Breast epithelium (tissue), 4 donors: ENCODE measurements at regions of chr6 and their contacts with region 1.

Region 1: GRCh38 chr6:41411961-41412360 is 76.6 kb downstream of the NCR2 start:
- DNase-seq: no peak
- H3K4me3 ChIP-seq: no peak overlapping the region
- H3K27ac ChIP-seq: no peak overlapping the region
- H3K4me1 ChIP-seq: no peaks in the 10 kb centered on the region
- H3K27me3 ChIP-seq: peaks cover 0 to 15% of the 10 kb centered on the region in 2 donors
- CTCF ChIP-seq: no peak
- POLR2A ChIP-seq: no peak

Region 2: DNA sequence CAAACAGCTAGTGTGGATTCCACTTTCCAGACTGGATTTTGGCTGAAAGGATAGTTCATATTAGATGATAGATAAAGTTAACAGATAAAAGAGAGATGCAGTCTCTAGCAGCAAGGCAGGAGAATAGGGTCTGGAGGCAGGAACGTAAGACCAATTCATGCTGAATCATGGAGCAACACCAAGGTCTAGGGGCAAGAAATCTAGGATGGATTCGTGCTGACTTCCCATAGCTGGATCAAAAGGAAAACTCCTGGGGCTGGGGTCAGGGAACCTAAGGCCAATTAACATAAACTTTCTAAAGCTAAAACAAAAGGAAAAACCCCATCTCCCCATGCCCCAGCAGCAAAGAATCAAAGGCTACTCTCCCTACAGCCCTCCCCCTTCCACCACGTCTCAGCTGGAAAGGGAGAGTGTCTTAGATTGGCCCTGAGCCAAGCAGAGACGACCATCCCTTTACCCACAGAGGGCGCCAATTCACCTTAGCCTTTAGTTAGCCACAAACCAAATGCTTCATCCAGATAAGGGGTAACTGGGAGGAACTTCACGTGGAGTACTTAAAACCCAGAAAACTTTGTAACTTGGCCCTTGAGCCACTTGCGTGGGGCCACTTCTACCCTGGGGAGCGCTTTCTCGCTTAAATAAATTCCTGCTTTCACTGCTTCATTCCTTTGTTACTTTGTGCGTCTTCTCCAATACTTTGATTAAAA is 133.1 kb before region 1 on chr6:
- intact Hi-C with region 1: no loop called
- DNase-seq: no peak
- H3K4me3 ChIP-seq: no peak overlapping the region
- H3K27ac ChIP-seq: no peak overlapping the region
- H3K4me1 ChIP-seq: no peaks in the 10 kb centered on the region
- H3K27me3 ChIP-seq: no peaks in the 10 kb centered on the region
- CTCF ChIP-seq: no peak
- POLR2A ChIP-seq: no peak

Region 3: GRCh38 chr6:41373919-41374617 is 37.9 kb before region 1 on chr6:
- intact Hi-C with region 1: loop called (anchors 1 kb)
- DNase-seq: no peak
- H3K4me3 ChIP-seq: peak overlapping the region in 1 of 3 donors; percentile 56
- H3K27ac ChIP-seq: no peak overlapping the region
- H3K4me1 ChIP-seq: peaks cover 0 to 9% of the 10 kb centered on the region in 2 donors
- H3K27me3 ChIP-seq: peaks cover 0 to 62% of the 10 kb centered on the region in 2 donors
- CTCF ChIP-seq: no peak
- POLR2A ChIP-seq: no peak